HepG2 (cell line): ENCODE measurements at regions of chr11 and their contacts with region 1.

Region 1: GRCh38 chr11:62621567-62622470 is at the start of gene B3GAT3:
- DNase-seq: peak; percentile 95
- ATAC-seq: peak; percentile 95
- H3K4me3 ChIP-seq: peak within 1 kb of the TSS; percentile 74 to 90 (median 81)
- H3K27ac ChIP-seq: peak within 1 kb of the TSS; percentile 72
- H3K4me1 ChIP-seq: peaks cover 21% of the 10 kb centered on the region
- H3K27me3 ChIP-seq: no peaks in the 10 kb centered on the region; a peak in 1 of 5 replicates
- CTCF ChIP-seq: peak; percentile 39
- EP300 ChIP-seq: 0 out of 4 replicates have a peak, but pooled peaks of 1 of the 2 experiments have one; percentile 18
- POLR2A ChIP-seq: peak; percentile 42 to 89
- RAD21 ChIP-seq: peak; percentile 20
- total RNA-seq, gene B3GAT3: 8.4 and 21.3 TPM in 2 replicates

Region 2: GRCh38 chr11:62601394-62602140 is 20.3 kb before region 1 on chr11 and contains the start of gene MTA2:
- CTCF ChIA-PET with region 1: no interaction called
- POLR2A ChIA-PET with region 1: interaction called, 25 read pairs
- in situ Hi-C with region 1: no loop called
- intact Hi-C with region 1: no loop called
- DNase-seq: peak; percentile 94
- ATAC-seq: peak; percentile 93
- H3K4me3 ChIP-seq: peak within 1 kb of the TSS; percentile 91 to 94 (median 94)
- H3K27ac ChIP-seq: peak within 1 kb of the TSS; percentile 88
- H3K4me1 ChIP-seq: peaks cover 43% of the 10 kb centered on the region
- H3K27me3 ChIP-seq: no peaks in the 10 kb centered on the region; a peak in 1 of 5 replicates
- CTCF ChIP-seq: 0 out of 2 replicates have a peak, but pooled peaks have one; percentile 2
- EP300 ChIP-seq: no peak
- POLR2A ChIP-seq: peak in 1 of 2 experiments; percentile 72; a peak in 2 of 4 replicates
- RAD21 ChIP-seq: no peak
- total RNA-seq, gene MTA2: 58.1 and 70.0 TPM in 2 replicates

Region 3: GRCh38 chr11:62645956-62646824 is 24.4 kb after region 1 on chr11 and contains the start of gene GANAB:
- CTCF ChIA-PET with region 1: no interaction called
- POLR2A ChIA-PET with region 1: interaction called, 53 read pairs
- in situ Hi-C with region 1: no loop called
- intact Hi-C with region 1: no loop called
- DNase-seq: peak; percentile 95
- ATAC-seq: peak; percentile 94
- H3K4me3 ChIP-seq: peak within 1 kb of the TSS; percentile 86 to 96 (median 90)
- H3K27ac ChIP-seq: peak within 1 kb of the TSS; percentile 98
- H3K4me1 ChIP-seq: peaks cover 53% of the 10 kb centered on the region
- H3K27me3 ChIP-seq: no peaks in the 10 kb centered on the region
- CTCF ChIP-seq: no peak
- EP300 ChIP-seq: no peak; a peak in 1 of 4 replicates
- POLR2A ChIP-seq: peak; percentile 92 to 95
- RAD21 ChIP-seq: no peak
- total RNA-seq, gene GANAB: 50.8 and 99.5 TPM in 2 replicates

Region 4: DNA sequence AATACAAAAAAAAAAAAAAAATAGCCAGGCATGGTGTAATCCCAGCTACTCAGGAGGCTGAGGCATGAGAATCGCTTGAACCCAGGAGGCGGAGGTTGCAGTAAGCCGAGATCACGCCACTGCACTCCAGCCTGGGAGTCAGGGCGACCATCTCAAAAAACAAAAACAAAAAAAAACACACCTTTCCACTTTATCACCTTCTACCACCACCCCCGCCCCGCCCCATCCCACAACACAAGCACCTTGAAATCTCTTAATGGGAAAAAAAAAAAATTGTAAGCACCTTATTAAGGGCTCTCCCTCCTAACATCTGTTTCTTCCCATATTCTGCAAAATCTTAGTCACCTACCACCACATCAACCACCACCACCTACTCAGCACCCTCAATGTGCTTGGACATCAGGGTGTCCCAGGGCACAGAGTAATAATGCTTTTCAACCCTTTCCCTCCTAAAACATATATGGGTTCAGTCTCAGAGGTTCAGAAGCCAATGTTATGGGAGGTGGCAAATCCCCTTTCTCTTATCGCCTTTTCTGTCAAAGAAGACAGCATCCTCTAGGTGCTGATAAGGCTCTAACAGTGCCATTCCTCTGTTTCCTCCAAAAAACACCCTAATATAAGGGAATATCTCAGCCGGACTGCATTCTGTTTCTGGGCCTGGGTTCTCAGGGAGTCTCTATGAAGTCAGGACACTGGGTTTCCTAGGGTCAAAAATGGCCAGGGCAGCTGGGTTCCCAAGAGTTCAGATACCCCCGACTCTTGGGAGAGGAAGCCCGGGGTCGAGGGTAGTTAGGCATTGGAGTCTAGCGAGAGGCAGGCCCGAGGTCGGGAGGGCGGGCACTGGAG is 30.6 kb after region 1 on chr11:
- CTCF ChIA-PET with region 1: no interaction called
- POLR2A ChIA-PET with region 1: interaction called, 53 read pairs
- in situ Hi-C with region 1: no loop called
- intact Hi-C with region 1: no loop called
- DNase-seq: no peak
- ATAC-seq: peak; percentile 16
- H3K4me3 ChIP-seq: peak overlapping the region; percentile 88 to 92 (median 89)
- H3K27ac ChIP-seq: peak overlapping the region; percentile 84
- H3K4me1 ChIP-seq: peaks cover 39% of the 10 kb centered on the region
- H3K27me3 ChIP-seq: no peaks in the 10 kb centered on the region
- CTCF ChIP-seq: no peak
- EP300 ChIP-seq: no peak
- POLR2A ChIP-seq: no peak
- RAD21 ChIP-seq: no peak

Region 5: GRCh38 chr11:62671575-62672389 is 50.0 kb after region 1 on chr11 and contains the starts of genes LBHD1 and UQCC3:
- CTCF ChIA-PET with region 1: no interaction called
- POLR2A ChIA-PET with region 1: interaction called, 13 read pairs
- in situ Hi-C with region 1: no loop called
- intact Hi-C with region 1: no loop called
- DNase-seq: peak; percentile 79
- ATAC-seq: peak; percentile 83
- H3K4me3 ChIP-seq: peak within 1 kb of the TSS; percentile 76 to 98 (median 91)
- H3K27ac ChIP-seq: peak within 1 kb of the TSS; percentile 90
- H3K4me1 ChIP-seq: peaks cover 59% of the 10 kb centered on the region
- H3K27me3 ChIP-seq: no peaks in the 10 kb centered on the region; a peak in 1 of 5 replicates
- CTCF ChIP-seq: no peak; the same call in none of the 2 replicates
- EP300 ChIP-seq: peak in 1 of 2 experiments; percentile 21; a peak in 1 of 4 replicates
- POLR2A ChIP-seq: peak; percentile 80 to 82
- RAD21 ChIP-seq: no peak
- total RNA-seq, gene LBHD1: 1.4 and 3.7 TPM in 2 replicates
- total RNA-seq, gene UQCC3: 12.1 and 16.0 TPM in 2 replicates